Ascending aorta (tissue), 2 donors: ENCODE measurements at regions of chr22 and their contacts with region 1.

Region 1: GRCh38 chr22:33920927-33921524 is 750 bp upstream of the LARGE1 start:
- DNase-seq: peak; percentile 79 to 99
- H3K4me3 ChIP-seq: peak overlapping the region; percentile 77 to 94
- H3K27ac ChIP-seq: peak overlapping the region; percentile 81 to 85
- H3K4me1 ChIP-seq: peaks cover 5 to 13% of the 10 kb centered on the region in 2 donors
- H3K27me3 ChIP-seq: no peaks in the 10 kb centered on the region
- CTCF ChIP-seq: no peak

Region 2: GRCh38 chr22:33519071-33519973 is 401.7 kb before region 1 on chr22:
- intact Hi-C with region 1: loop called (anchors 10 kb)
- DNase-seq: no peak
- H3K4me3 ChIP-seq: no peak overlapping the region
- H3K27ac ChIP-seq: no peak overlapping the region
- H3K4me1 ChIP-seq: no peaks in the 10 kb centered on the region
- H3K27me3 ChIP-seq: no peaks in the 10 kb centered on the region
- CTCF ChIP-seq: peak; percentile 34 to 72 (median 46)

Region 3: DNA sequence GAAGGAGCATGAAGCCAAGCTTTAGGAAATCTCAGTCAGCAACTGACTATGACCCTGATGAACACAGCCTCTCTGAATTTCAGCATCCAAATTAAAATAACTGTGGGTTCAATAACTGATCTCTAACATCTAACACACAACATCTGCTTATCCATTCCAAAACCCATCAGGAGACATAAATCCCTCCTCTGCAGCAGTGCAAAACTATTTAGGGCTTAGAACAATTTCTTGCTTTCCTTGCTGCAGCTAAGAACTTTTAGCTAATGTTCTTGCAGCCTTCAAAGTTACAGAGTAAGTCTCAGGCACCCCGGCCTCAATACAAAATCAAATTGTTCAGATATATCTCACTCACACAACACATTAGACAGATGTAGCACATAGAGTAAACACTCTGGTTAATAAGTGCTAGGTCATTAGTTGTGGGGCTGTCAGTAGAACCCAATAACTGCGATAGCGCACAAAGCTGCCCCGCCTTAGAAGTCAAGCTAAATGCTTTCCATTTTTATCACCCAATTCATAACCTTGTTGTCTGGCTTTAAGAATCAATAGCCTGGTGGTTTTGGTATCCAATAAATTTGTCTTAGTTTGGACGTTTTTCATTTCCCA is 140.4 kb before region 1 on chr22:
- intact Hi-C with region 1: no loop called
- DNase-seq: no peak
- H3K4me3 ChIP-seq: no peak overlapping the region
- H3K27ac ChIP-seq: no peak overlapping the region
- H3K4me1 ChIP-seq: peaks cover 0 to 4% of the 10 kb centered on the region in 2 donors
- H3K27me3 ChIP-seq: no peaks in the 10 kb centered on the region
- CTCF ChIP-seq: no peak

Region 4: GRCh38 chr22:33803371-33804282 is 117.4 kb before region 1 on chr22:
- intact Hi-C with region 1: loop called (anchors 5 kb)
- DNase-seq: no peak
- H3K4me3 ChIP-seq: no peak overlapping the region
- H3K27ac ChIP-seq: no peak overlapping the region
- H3K4me1 ChIP-seq: no peaks in the 10 kb centered on the region
- H3K27me3 ChIP-seq: no peaks in the 10 kb centered on the region
- CTCF ChIP-seq: no peak

Region 5: DNA sequence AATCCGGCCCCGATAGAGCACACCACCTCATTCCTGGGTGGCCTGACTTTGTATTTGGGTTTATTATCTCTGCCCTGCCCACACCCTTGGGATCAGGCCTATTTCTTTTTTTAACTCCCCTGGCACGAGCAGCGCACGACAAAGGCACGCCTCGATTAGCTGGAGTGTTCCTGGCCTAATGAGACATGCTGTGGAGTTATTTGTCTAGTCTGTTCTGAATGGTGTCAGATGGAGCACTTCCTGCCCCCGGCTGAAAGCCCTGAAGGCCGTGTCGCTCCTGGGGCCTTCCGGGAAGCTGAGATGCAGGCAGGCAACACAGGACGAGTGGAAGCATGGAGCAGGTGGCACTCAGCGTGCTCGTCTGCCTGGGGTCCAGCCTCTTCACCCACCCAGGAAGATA is 47.8 kb before region 1 on chr22:
- intact Hi-C with region 1: loop called (anchors 1 kb)
- DNase-seq: peak in 1 of 2 donors; percentile 72
- H3K4me3 ChIP-seq: peak overlapping the region in 1 of 2 donors; percentile 20
- H3K27ac ChIP-seq: peak overlapping the region; percentile 85 to 87
- H3K4me1 ChIP-seq: peaks cover 3 to 36% of the 10 kb centered on the region in 2 donors
- H3K27me3 ChIP-seq: no peaks in the 10 kb centered on the region
- CTCF ChIP-seq: no peak